Natural killer cell (primary cell): ENCODE measurements at regions of chr15 and their contacts with region 1.

Region 1: GRCh38 chr15:73273181-73274002 is 95.4 kb downstream of the HCN4 start:
- DNase-seq: peak in 1 of 2 donors; percentile 69
- ATAC-seq: peak; percentile 64 to 77 (median 71)
- H3K4me3 ChIP-seq: no peak overlapping the region
- H3K4me3 Mint-ChIP-seq: no peak overlapping the region
- H3K27ac ChIP-seq: no peak overlapping the region
- H3K27ac Mint-ChIP-seq: no peak overlapping the region
- H3K4me1 ChIP-seq: no peaks in the 10 kb centered on the region
- H3K4me1 Mint-ChIP-seq: peaks cover 5% of the 10 kb centered on the region in 2 donors
- H3K27me3 ChIP-seq: no peaks in the 10 kb centered on the region
- H3K27me3 Mint-ChIP-seq: no peaks in the 10 kb centered on the region
- CTCF ChIP-seq: peak; percentile 86

Region 2: DNA sequence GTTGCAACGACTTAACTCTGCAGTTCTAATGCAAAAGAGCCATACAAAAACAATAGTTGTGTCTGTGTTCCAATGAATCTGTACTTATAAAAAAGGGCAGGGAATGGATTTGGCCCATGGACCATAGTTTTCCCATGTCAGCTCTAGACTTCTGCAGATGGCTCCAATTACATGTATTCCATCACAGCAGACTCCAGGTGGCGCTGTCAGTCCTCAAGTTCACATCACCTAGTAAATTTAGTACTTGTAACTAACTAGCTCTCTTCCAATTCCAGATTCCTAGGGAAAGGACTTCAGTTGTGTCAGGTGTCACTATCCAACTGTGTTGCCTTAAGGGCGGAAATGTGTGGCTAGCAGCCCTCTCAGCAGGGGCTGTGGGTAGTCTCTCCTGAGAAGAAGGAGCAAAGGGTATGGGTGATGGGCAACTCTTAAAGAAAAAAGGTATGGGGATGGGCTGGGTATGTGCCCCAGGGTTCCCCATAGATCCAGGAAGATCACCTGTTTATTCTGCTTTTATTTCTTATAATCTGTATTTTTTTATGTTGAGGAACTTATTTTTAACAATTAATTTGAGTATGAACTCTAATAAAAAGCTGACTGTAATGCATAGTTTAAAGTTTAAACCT is 551.2 kb before region 1 on chr15:
- intact Hi-C with region 1: loop called (anchors 1 kb)
- DNase-seq: peak; percentile 58 to 81
- ATAC-seq: peak; percentile 42 to 60 (median 58)
- H3K4me3 ChIP-seq: no peak overlapping the region
- H3K4me3 Mint-ChIP-seq: no peak overlapping the region
- H3K27ac ChIP-seq: no peak overlapping the region
- H3K27ac Mint-ChIP-seq: no peak overlapping the region
- H3K4me1 ChIP-seq: no peaks in the 10 kb centered on the region
- H3K4me1 Mint-ChIP-seq: no peaks in the 10 kb centered on the region
- H3K27me3 ChIP-seq: no peaks in the 10 kb centered on the region
- H3K27me3 Mint-ChIP-seq: no peaks in the 10 kb centered on the region
- CTCF ChIP-seq: peak; percentile 88

Region 3: GRCh38 chr15:73240866-73241499 is 32.4 kb before region 1 on chr15:
- intact Hi-C with region 1: loop called (anchors 1 kb)
- DNase-seq: peak; percentile 57 to 81
- ATAC-seq: peak in 2 of 3 donors; percentile 40 to 66
- H3K4me3 ChIP-seq: no peak overlapping the region
- H3K4me3 Mint-ChIP-seq: no peak overlapping the region
- H3K27ac ChIP-seq: no peak overlapping the region
- H3K27ac Mint-ChIP-seq: no peak overlapping the region
- H3K4me1 ChIP-seq: no peaks in the 10 kb centered on the region
- H3K4me1 Mint-ChIP-seq: no peaks in the 10 kb centered on the region
- H3K27me3 ChIP-seq: no peaks in the 10 kb centered on the region
- H3K27me3 Mint-ChIP-seq: peaks cover 0 to 3% of the 10 kb centered on the region in 2 donors
- CTCF ChIP-seq: peak; percentile 98